Mucosa of descending colon (tissue), 3 donors: ENCODE measurements at regions of chr12 and their contacts with region 1.

Region 1: GRCh38 chr12:52372216-52373154 is 5.2 kb upstream of the KRT85 start:
- DNase-seq: peak in 2 of 3 donors; percentile 83 to 90
- ATAC-seq: peak; percentile 90
- H3K4me3 ChIP-seq: no peak overlapping the region
- H3K4me1 ChIP-seq: no peaks in the 10 kb centered on the region
- CTCF ChIP-seq: peak; percentile 60

Region 2: DNA sequence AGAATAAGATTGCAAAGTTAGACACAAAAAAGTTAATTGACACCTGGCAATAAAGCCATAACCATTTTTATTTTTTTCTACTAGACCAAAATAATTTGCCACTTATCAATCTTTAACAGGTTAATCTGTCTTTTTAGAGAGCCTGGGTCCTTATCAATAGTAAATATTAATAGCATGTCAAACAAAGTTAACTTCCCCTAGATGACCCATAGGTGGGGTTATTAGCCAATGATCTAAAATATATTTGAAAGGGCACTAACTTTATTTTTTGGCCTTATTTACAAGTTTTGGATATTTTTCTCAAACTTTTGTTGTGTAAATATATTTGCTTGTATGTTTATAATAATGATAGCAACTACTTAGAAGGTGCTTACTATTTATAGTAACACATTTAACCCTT is 480.6 kb before region 1 on chr12:
- intact Hi-C with region 1: no loop called
- DNase-seq: no peak
- ATAC-seq: no peak
- H3K4me3 ChIP-seq: no peak overlapping the region
- H3K4me1 ChIP-seq: peaks cover 9% of the 10 kb centered on the region
- CTCF ChIP-seq: no peak

Region 3: GRCh38 chr12:52338241-52338960 is 34.1 kb before region 1 on chr12:
- intact Hi-C with region 1: no loop called
- DNase-seq: no peak
- ATAC-seq: no peak
- H3K4me3 ChIP-seq: no peak overlapping the region
- H3K4me1 ChIP-seq: peaks cover 9% of the 10 kb centered on the region
- CTCF ChIP-seq: no peak

Region 4: GRCh38 chr12:52506858-52507715 is 134.6 kb after region 1 on chr12:
- intact Hi-C with region 1: loop called (anchors 10 kb)
- DNase-seq: peak in 1 of 3 donors; percentile 14
- ATAC-seq: peak; percentile 26
- H3K4me3 ChIP-seq: no peak overlapping the region
- H3K4me1 ChIP-seq: no peaks in the 10 kb centered on the region
- CTCF ChIP-seq: no peak